ENCODE measurements at regions of chr14 and their contacts with region 1.

Region 1: GRCh38 chr14:95993768-95994592 is 45.2 kb upstream of the C14orf132 start:
- DNase-seq: no peak

Region 2: GRCh38 chr14:95561001-95561412 is 433.0 kb before region 1 on chr14:
- intact Hi-C with region 1: loop called (anchors 2 kb)
- DNase-seq: peak; percentile 84

Measured in cardiac septum (tissue), 1 donor.